ENCODE measurements at regions of chr10 and their contacts with region 1.

Region 1: DNA sequence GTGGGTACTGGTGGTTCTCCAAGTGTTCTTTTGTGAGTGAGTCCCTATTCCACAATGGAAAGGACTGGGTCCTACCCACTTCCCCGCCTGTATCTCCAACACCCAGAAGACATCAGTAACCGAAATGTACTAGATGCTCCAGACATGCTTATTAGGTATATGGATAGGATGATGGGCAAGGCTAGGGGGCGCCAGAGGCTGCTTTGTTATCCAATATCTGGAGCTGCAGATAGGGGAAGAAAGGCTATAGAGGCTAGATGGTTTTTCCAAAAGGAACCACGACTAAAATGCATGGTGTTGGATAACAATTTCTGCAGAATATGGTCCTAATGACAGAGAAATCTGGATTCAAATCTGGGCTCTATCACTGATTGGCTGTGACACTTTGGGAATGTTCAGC is 56.2 kb upstream of the TM9SF3 start:
- DNase-seq: no peak
- H3K4me3 ChIP-seq: no peak overlapping the region
- H3K27ac ChIP-seq: no peak overlapping the region
- H3K4me1 ChIP-seq: no peaks in the 10 kb centered on the region
- H3K27me3 ChIP-seq: peaks cover 0 to 6% of the 10 kb centered on the region in 2 experiments
- CTCF ChIP-seq: peak; percentile 12 to 24
- POLR2A ChIP-seq: no peak

Region 2: GRCh38 chr10:96395931-96396877 is 246.8 kb before region 1 on chr10:
- CTCF ChIA-PET with region 1: interaction called, 5 read pairs
- POLR2A ChIA-PET with region 1: no interaction called
- dilution Hi-C with region 1: no loop called
- intact Hi-C with region 1: loop called (anchors 2 kb)
- DNase-seq: peak; percentile 64
- H3K4me3 ChIP-seq: no peak overlapping the region
- H3K27ac ChIP-seq: no peak overlapping the region
- H3K4me1 ChIP-seq: no peaks in the 10 kb centered on the region
- H3K27me3 ChIP-seq: peaks cover 4 to 9% of the 10 kb centered on the region in 2 experiments
- CTCF ChIP-seq: peak; percentile 76 to 86
- POLR2A ChIP-seq: no peak

Region 3: GRCh38 chr10:96416643-96417042 is 226.3 kb before region 1 on chr10:
- CTCF ChIA-PET with region 1: no interaction called
- POLR2A ChIA-PET with region 1: no interaction called
- dilution Hi-C with region 1: no loop called
- intact Hi-C with region 1: no loop called
- DNase-seq: no peak
- H3K4me3 ChIP-seq: no peak overlapping the region
- H3K27ac ChIP-seq: no peak overlapping the region
- H3K4me1 ChIP-seq: no peaks in the 10 kb centered on the region
- H3K27me3 ChIP-seq: peaks cover 7% of the 10 kb centered on the region in 2 experiments
- CTCF ChIP-seq: no peak
- POLR2A ChIP-seq: no peak

Region 4: DNA sequence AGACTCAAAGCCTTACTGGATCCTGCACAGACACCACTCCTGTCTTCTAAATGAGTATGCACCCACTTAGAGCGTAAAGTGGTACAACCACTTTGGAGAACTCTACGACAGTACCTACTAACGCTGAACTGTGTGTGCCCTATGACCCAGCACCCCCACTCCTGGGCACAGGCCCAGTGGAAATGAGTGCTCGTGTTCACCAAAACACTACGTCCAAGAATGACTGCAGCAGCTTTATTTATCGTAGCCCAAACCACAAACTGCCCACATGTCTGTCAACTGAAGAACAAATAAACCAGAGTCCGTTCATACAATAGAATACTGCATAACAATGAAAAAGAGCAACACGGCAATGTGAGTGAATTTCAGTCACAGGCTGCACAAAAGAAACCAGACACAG is 164.7 kb before region 1 on chr10:
- CTCF ChIA-PET with region 1: no interaction called
- POLR2A ChIA-PET with region 1: no interaction called
- dilution Hi-C with region 1: no loop called
- intact Hi-C with region 1: no loop called
- DNase-seq: no peak
- H3K4me3 ChIP-seq: no peak overlapping the region
- H3K27ac ChIP-seq: no peak overlapping the region
- H3K4me1 ChIP-seq: no peaks in the 10 kb centered on the region
- H3K27me3 ChIP-seq: peaks cover 0 to 3% of the 10 kb centered on the region in 2 experiments
- CTCF ChIP-seq: no peak
- POLR2A ChIP-seq: no peak

Region 5: GRCh38 chr10:96586419-96587263 is 56.3 kb before region 1 on chr10 and contains the start of gene TM9SF3:
- CTCF ChIA-PET with region 1: interaction called, 4 read pairs
- POLR2A ChIA-PET with region 1: no interaction called
- dilution Hi-C with region 1: no loop called
- intact Hi-C with region 1: loop called (anchors 2 kb)
- DNase-seq: peak; percentile 84
- H3K4me3 ChIP-seq: peak within 1 kb of the TSS; percentile 59 to 92 (median 61)
- H3K27ac ChIP-seq: peak within 1 kb of the TSS; percentile 98
- H3K4me1 ChIP-seq: peaks cover 53% of the 10 kb centered on the region
- H3K27me3 ChIP-seq: no peaks in the 10 kb centered on the region
- CTCF ChIP-seq: no peak
- POLR2A ChIP-seq: peak; percentile 26
- total RNA-seq, gene TM9SF3: 142 and 144 TPM in 2 replicates

Region 6: GRCh38 chr10:96743988-96744585 is 101.1 kb after region 1 on chr10:
- CTCF ChIA-PET with region 1: interaction called, 15 read pairs
- POLR2A ChIA-PET with region 1: no interaction called
- dilution Hi-C with region 1: no loop called
- intact Hi-C with region 1: no loop called
- DNase-seq: no peak
- H3K4me3 ChIP-seq: no peak overlapping the region
- H3K27ac ChIP-seq: no peak overlapping the region
- H3K4me1 ChIP-seq: no peaks in the 10 kb centered on the region
- H3K27me3 ChIP-seq: no peaks in the 10 kb centered on the region
- CTCF ChIP-seq: peak in 1 of 2 donors; percentile 3
- POLR2A ChIP-seq: no peak

Region 7: DNA sequence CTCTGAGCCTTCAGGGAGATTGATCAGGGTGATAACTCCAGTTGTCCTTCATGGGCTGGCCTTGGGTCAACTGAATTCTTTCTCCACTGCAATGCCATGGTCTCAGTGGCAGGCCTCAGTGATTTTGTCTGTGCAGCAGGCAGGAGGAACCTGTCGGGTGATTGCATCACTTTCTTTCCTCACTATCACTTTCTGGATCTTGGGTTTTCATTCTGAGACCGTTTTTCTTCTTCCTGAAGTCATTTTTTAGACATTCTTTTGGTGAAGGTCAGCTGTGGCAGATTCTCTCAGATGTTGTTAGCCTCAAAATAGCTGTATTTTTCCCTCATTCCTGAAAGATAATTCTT is 160.3 kb after region 1 on chr10:
- CTCF ChIA-PET with region 1: no interaction called
- POLR2A ChIA-PET with region 1: no interaction called
- dilution Hi-C with region 1: no loop called
- intact Hi-C with region 1: no loop called
- DNase-seq: no peak
- H3K4me3 ChIP-seq: no peak overlapping the region
- H3K27ac ChIP-seq: no peak overlapping the region
- H3K4me1 ChIP-seq: no peaks in the 10 kb centered on the region
- H3K27me3 ChIP-seq: no peaks in the 10 kb centered on the region
- CTCF ChIP-seq: no peak
- POLR2A ChIP-seq: no peak

Region 8: GRCh38 chr10:96826438-96826837 is 183.5 kb after region 1 on chr10:
- CTCF ChIA-PET with region 1: interaction called, 15 read pairs
- POLR2A ChIA-PET with region 1: no interaction called
- dilution Hi-C with region 1: no loop called
- intact Hi-C with region 1: loop called (anchors 1 kb)
- DNase-seq: no peak
- H3K4me3 ChIP-seq: no peak overlapping the region
- H3K27ac ChIP-seq: no peak overlapping the region
- H3K4me1 ChIP-seq: peaks cover 4% of the 10 kb centered on the region
- H3K27me3 ChIP-seq: peaks cover 0 to 4% of the 10 kb centered on the region in 2 experiments
- CTCF ChIP-seq: no peak
- POLR2A ChIP-seq: no peak

Region 9: DNA sequence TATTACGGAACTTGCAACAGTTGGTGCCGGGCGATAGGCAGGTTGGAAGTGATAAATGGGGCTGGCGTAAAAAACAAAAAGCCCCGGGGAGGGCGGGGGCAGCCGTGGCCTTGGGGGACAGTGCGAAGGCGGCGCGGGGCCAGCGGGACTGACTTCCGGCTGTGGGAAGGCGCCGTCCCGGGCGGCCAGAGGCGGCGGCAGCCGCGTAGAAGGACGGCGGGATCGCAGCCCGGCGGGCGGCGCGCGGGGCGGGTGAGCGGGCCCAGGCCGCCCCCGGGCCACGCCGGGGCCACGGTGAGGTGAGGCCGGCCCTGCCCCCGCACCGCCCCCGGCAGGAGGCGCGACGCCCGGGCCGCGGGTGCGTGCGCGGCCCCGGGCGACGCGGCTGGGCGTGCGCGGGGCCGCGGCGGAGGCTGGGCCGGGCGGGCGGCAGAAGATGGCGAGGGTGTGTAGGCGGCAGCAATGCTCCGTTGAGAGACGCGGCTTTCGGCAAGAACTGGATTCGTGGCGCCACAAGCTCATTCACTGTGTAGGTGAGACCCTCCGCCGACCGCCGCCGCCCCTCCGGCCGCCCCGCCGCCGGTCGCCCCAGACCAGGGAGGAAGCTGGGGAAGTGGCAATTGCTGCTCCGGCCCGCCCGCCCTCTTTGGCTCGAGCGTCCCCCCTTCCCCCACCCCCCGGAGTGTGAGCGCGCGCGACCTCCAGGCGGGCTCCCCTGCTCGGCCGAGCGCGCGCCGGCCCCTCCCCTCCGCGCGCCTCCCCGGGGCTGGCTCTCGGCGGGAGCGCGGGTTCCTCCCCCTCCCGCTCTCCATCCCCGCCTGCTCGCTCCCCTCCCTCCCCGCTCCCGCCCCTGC is 189.1 kb after region 1 on chr10 and contains the start of gene LCOR:
- CTCF ChIA-PET with region 1: interaction called, 15 read pairs
- POLR2A ChIA-PET with region 1: no interaction called
- dilution Hi-C with region 1: no loop called
- intact Hi-C with region 1: loop called (anchors 1 kb)
- DNase-seq: peak; percentile 85
- H3K4me3 ChIP-seq: peak within 1 kb of the TSS; percentile 81 to 99 (median 82)
- H3K27ac ChIP-seq: peak within 1 kb of the TSS; percentile 60
- H3K4me1 ChIP-seq: peaks cover 24% of the 10 kb centered on the region
- H3K27me3 ChIP-seq: no peaks in the 10 kb centered on the region
- CTCF ChIP-seq: no peak
- POLR2A ChIP-seq: peak; percentile 87
- total RNA-seq, gene LCOR: 32.9 and 39.0 TPM in 2 replicates

Region 10: DNA sequence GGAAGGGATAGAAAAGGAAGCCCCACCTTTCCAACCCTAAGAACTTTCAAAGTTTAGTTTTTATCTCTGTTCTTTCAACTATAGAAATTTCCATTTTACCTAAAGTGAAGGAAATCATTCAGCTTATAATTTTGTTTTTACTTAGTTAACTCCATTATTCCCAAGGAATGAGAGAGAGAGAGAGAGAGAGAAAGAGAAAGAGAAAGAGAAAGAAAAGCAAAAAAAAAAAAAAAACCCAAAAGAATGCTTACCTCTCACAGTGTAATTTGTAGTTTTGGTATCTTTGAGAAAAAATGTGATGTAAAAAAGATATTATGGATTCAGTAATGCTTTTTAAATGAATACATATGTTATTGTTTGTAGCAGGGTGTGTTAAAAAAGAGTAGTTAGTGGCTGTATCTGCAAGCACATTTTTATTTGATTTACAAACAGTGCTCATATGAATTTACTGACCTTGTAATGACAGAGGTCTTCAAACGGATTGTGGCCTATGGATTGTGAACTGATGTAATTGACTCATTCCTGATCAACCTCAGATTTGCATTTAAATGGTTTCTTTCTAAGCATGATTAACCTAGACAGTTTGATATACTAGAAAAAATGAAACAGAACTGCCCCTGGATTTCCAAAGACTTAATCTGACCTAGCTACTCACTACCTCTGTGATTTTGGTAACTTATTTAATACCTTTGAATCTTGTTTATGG is 254.1 kb after region 1 on chr10:
- CTCF ChIA-PET with region 1: no interaction called
- POLR2A ChIA-PET with region 1: no interaction called
- dilution Hi-C with region 1: no loop called
- intact Hi-C with region 1: no loop called
- DNase-seq: no peak
- H3K4me3 ChIP-seq: no peak overlapping the region
- H3K27ac ChIP-seq: no peak overlapping the region
- H3K4me1 ChIP-seq: no peaks in the 10 kb centered on the region
- H3K27me3 ChIP-seq: no peaks in the 10 kb centered on the region
- CTCF ChIP-seq: no peak
- POLR2A ChIP-seq: no peak

Measured in endothelial cell of umbilical vein (primary cell).